ENCODE measurements at regions of chr1 and their contacts with region 1.

Region 1: DNA sequence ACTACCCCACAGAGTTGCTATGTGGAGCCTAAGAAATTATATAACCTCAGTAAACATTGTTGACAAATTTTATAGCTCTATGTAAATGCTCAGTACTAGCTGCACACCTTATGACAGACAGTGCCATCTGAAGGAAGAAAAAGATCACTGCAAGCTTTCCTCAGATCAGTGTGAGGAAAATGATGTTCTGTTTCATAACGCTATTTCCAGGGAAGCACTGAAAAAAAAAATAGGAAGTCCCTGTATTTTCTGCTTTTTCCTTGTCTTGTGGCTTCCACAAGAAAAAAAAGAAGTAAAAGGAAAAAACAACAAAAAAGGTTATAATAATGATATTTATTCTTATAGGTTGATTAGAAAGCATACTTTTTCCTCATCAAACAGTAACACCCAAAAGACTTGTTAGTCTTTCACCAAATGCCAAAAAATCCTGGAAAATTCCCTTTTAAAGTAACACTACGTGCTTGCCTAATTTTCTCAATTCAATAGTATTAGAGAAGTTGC is 23.2 kb downstream of the LYST start:
- DNase-seq: no peak
- ATAC-seq: peak; percentile 82
- H3K4me3 ChIP-seq: no peak overlapping the region
- H3K27ac ChIP-seq: no peak overlapping the region
- H3K4me1 ChIP-seq: peaks cover 7% of the 10 kb centered on the region
- H3K27me3 ChIP-seq: no peaks in the 10 kb centered on the region
- CTCF ChIP-seq: peak; percentile 66 to 75 (median 66)
- EP300 ChIP-seq: no peak
- POLR2A ChIP-seq: no peak
- RAD21 ChIP-seq: peak; percentile 69

Region 2: DNA sequence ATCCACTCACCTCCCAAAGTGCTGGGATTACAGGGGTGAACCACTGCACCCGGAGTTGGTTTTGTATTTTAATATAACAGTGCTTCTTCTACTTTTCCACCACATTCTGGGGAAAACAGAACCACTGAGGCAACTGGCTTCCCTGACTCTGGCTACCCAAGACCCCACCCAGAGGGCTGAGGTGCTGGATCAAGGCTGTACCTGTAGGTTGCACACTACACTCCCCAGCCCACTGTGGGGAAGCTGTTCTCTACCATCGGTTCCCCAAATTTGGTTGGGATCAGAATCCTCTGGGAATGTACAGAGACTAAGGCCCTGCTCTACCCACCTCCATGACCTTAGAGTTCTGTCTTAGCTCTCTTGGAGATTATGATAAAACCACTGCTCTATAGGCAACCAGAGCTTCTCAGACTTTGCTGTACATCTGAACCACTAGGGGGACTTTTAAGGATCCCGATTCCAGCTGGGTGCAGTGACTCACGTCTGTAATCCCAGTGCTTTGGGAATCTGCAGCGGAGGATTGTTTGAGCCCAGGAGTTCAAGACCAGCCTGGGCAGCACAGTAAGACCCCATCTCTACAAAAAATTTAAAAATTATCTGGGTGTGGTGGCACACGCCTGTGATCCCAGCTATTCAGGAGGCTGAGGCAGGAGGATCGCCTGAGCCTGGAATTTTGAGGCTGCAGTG is 245.5 kb before region 1 on chr1:
- CTCF ChIA-PET with region 1: interaction called, 17 read pairs
- POLR2A ChIA-PET with region 1: interaction called, 5 read pairs
- RAD21 ChIA-PET with region 1: interaction called, 13 read pairs
- SMC1A ChIA-PET with region 1: interaction called, 13 read pairs
- in situ Hi-C with region 1: no loop called
- intact Hi-C with region 1: no loop called
- DNase-seq: no peak
- ATAC-seq: peak; percentile 42; the same call in 2 of the 3 replicates
- H3K4me3 ChIP-seq: no peak overlapping the region
- H3K27ac ChIP-seq: no peak overlapping the region
- H3K4me1 ChIP-seq: no peaks in the 10 kb centered on the region
- H3K27me3 ChIP-seq: no peaks in the 10 kb centered on the region
- CTCF ChIP-seq: peak; percentile 13 to 41 (median 35); a peak in 5 of 6 replicates
- EP300 ChIP-seq: no peak
- POLR2A ChIP-seq: no peak
- RAD21 ChIP-seq: no peak

Region 3: DNA sequence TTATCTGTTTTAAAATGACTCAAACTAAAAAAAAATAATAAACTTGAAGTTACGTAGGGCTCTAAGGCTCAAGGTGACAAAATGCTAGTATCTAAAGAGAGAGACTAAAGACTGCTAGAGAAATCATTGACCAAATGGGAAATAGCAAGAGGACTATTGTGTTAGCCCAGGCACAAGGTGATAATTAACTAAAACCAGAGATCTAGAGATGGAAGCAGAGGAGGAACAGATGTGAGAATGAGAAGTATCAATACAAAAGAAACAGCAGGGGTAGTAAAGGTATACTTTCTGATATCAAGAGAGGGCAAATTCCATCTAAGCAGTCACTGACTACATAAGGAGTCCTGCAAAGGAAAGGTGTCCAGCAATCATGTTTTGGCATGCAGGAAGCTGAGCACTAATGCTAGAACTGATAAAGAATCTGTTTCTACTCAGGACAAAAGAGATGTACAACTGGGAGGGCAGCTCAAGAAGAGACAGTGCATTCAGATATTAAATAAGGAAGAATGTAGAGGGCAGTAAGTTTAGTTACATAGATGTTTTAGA is 93.7 kb before region 1 on chr1:
- CTCF ChIA-PET with region 1: interaction called, 23 read pairs
- POLR2A ChIA-PET with region 1: no interaction called
- RAD21 ChIA-PET with region 1: interaction called, 8 read pairs
- SMC1A ChIA-PET with region 1: interaction called, 5 read pairs
- in situ Hi-C with region 1: no loop called
- intact Hi-C with region 1: no loop called
- DNase-seq: no peak
- ATAC-seq: peak; percentile 45
- H3K4me3 ChIP-seq: no peak overlapping the region
- H3K27ac ChIP-seq: no peak overlapping the region
- H3K4me1 ChIP-seq: no peaks in the 10 kb centered on the region
- H3K27me3 ChIP-seq: no peaks in the 10 kb centered on the region
- CTCF ChIP-seq: no peak
- EP300 ChIP-seq: no peak
- POLR2A ChIP-seq: no peak
- RAD21 ChIP-seq: no peak

Region 4: GRCh38 chr1:235806123-235806522 is 37.4 kb before region 1 on chr1:
- CTCF ChIA-PET with region 1: interaction called, 27 read pairs
- POLR2A ChIA-PET with region 1: no interaction called
- RAD21 ChIA-PET with region 1: interaction called, 4 read pairs
- SMC1A ChIA-PET with region 1: interaction called, 10 read pairs
- in situ Hi-C with region 1: no loop called
- intact Hi-C with region 1: no loop called
- DNase-seq: no peak
- ATAC-seq: no peak
- H3K4me3 ChIP-seq: no peak overlapping the region
- H3K27ac ChIP-seq: no peak overlapping the region
- H3K4me1 ChIP-seq: no peaks in the 10 kb centered on the region
- H3K27me3 ChIP-seq: no peaks in the 10 kb centered on the region
- CTCF ChIP-seq: no peak
- EP300 ChIP-seq: no peak
- POLR2A ChIP-seq: no peak
- RAD21 ChIP-seq: no peak

Region 5: DNA sequence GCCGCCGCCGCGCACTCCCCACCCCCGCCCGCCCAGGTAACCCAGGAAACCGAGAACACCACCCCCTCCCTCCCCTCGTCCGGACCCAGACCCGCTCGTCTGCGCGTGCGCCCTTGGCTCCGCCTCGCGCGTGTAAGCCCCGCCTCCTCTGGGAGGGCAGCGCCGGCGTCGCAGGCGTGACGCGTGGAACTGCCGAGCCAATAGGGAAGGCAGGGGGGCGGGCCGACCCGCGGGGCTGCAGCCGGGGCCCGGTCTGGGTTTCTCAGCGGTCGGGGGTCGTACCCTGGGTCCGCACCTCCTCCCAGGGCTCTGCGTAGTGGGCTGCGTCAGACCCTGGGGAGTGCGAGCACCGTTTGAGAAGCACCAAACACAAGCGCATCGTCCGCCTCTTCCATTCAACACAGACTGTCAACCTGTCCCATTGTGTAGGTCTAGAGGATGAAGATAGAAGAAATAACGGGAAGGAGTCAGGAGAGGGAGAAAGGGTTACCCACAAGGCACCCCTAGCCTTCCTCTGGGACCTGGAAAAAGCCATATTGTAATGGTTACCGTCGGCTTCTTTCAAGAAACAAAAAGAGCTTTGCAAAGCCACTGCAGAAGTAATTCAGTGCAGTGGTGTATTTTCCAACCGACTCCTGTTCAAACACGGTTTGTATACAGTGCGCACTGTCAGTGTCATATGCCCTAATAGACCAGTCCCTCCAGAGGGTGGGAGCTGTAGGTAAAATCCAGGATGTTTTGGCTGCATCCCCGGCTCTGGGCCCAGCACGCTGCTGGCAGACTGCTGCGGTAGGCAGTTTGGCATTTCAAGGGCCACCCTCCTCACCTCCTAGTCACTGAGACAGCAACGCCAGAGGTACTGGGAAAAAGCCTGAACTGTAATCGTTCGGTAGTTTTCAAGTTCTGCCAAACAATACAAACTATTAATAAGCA is 23.7 kb after region 1 on chr1:
- CTCF ChIA-PET with region 1: interaction called, 62 read pairs
- POLR2A ChIA-PET with region 1: interaction called, 23 read pairs
- RAD21 ChIA-PET with region 1: interaction called, 33 read pairs
- SMC1A ChIA-PET with region 1: interaction called, 39 read pairs
- in situ Hi-C with region 1: no loop called
- intact Hi-C with region 1: no loop called
- DNase-seq: peak; percentile 87
- ATAC-seq: peak; percentile 78
- H3K4me3 ChIP-seq: peak overlapping the region; percentile 91
- H3K27ac ChIP-seq: peak overlapping the region; percentile 88
- H3K4me1 ChIP-seq: peaks cover 5% of the 10 kb centered on the region; the same call in 1 of the 2 replicates
- H3K27me3 ChIP-seq: no peaks in the 10 kb centered on the region
- CTCF ChIP-seq: no peak
- EP300 ChIP-seq: no peak
- POLR2A ChIP-seq: peak; percentile 88
- RAD21 ChIP-seq: no peak

Region 6: GRCh38 chr1:235946571-235946981 is 103.1 kb after region 1 on chr1:
- CTCF ChIA-PET with region 1: interaction called, 27 read pairs
- POLR2A ChIA-PET with region 1: no interaction called
- RAD21 ChIA-PET with region 1: interaction called, 10 read pairs
- SMC1A ChIA-PET with region 1: interaction called, 31 read pairs
- in situ Hi-C with region 1: no loop called
- intact Hi-C with region 1: no loop called
- DNase-seq: no peak
- ATAC-seq: peak; percentile 86
- H3K4me3 ChIP-seq: no peak overlapping the region
- H3K27ac ChIP-seq: no peak overlapping the region
- H3K4me1 ChIP-seq: peaks cover 17% of the 10 kb centered on the region
- H3K27me3 ChIP-seq: no peaks in the 10 kb centered on the region
- CTCF ChIP-seq: peak; percentile 42 to 58 (median 55); a peak in 5 of 6 replicates
- EP300 ChIP-seq: no peak
- POLR2A ChIP-seq: no peak
- RAD21 ChIP-seq: peak; percentile 73